ENCODE measurements at regions of chr5 and their contacts with region 1.

Region 1: DNA sequence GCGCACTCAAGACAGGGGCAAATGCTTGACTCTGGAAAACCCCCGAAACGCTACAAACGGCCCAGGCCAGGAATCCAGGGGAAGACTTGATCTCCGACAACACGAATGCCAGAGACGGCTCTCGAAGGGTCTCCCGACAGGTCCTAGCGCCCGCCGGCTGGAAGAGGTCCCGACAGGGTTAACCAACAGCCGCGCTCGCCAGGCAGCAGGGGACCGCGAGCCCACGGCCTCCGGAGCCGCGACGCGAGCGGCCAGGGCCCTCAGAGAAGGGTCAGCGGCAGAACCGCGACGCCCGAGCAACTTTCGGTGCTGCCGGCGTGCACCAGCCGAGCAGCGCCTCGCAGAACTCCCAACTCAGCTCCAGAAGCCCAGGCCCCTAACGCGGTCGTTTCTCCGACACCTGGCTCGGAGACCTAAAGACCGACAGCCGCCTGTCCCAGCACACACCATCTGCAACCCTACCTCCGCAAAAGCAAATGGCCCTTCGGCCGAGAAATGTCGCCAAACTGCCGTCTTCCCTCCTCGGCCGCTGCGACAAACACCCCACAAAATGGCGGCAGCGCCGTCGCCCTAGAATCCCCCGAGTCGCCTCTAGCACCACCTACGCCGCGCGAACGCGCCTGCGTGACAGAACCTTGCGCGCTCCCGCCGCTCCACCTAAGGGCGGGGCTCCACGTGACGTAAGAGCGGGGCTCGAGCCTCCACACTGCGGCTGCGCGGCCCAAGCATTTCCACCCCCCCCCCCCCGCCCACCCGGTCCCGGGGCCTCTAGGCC is at the start of gene CLK4:
- DNase-seq: peak; percentile 99
- total RNA-seq, gene CLK4: 22.1 TPM

Region 2: GRCh38 chr5:178350361-178351220 is 276.1 kb before region 1 on chr5:
- intact Hi-C with region 1: no loop called
- DNase-seq: no peak

Region 3: DNA sequence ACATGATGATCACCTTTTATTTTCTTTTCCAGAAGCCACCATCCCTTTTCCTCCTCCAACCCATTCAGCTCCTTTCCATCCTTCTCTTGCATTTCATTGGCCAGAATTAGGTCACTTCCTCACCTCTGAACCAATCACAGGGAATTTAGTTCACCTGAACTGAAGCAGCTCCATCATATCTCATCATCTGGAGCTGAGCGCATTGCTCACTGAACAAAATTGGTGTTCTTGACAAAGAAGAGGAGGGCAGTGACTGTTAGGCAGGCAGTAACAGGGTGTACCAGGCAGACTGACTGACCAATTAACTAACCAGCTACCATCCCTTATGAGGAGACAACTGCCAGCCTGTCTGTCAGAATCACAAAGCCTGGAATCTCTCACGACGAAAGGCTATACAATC is 105.6 kb after region 1 on chr5:
- intact Hi-C with region 1: loop called (anchors 5 kb)
- DNase-seq: no peak

Region 4: DNA sequence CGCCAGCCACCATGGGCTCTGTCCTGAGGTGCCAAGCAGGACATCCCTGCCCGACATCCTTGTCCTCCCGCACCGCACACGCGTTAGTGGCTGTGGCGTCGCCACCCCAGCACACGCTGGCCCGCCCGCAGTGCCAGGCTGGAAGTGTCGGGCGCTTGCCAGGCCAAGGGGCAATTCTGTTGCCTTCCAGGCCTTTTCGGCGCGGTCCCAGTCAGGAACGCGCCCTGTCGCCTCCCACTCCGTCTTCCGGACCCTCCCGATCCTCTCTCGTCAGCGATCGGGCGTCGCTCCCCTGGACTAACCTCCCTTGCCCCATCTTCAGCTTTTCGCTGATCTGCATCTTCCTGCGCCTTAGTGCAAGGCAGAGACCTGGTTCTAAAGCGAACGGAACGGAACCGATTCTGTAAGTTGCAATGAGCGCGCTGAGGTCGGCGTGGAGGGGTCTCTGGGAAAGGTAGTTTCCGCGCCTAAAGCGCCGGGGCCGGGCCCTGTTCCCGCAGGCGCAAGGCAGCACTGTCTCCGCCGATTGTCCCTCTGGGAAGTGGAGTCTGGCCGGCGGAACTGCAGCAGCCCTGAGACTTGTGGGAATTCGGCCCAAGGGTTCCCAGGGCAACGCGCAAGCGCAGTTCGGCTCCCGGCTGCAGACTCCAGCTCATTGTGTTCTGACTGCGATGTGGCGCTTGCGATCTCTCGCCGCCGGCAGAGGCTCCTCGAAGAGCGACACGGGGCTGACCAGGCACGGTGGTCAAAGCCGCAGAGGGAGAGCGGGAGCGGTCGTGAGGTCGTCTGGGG is 314.1 kb after region 1 on chr5 and contains the start of gene ZNF454:
- intact Hi-C with region 1: loop called (anchors 10 kb)
- DNase-seq: peak; percentile 96
- total RNA-seq, gene ZNF454: 1.7 TPM

Measured in cardiac septum (tissue), 1 donor.